Naive thymus-derived CD4-positive, alpha-beta T cell (primary cell): ENCODE measurements at regions of chr2 and their contacts with region 1.

Region 1: GRCh38 chr2:64653349-64654062 is at the start of gene SERTAD2:
- DNase-seq: peak; percentile 80 to 89 (median 86)
- ATAC-seq: peak; percentile 93
- H3K4me3 ChIP-seq: peak within 1 kb of the TSS; percentile 66
- H3K4me3 Mint-ChIP-seq: peak within 1 kb of the TSS; percentile 84 to 99 (median 96)
- H3K27ac ChIP-seq: peak within 1 kb of the TSS; percentile 90
- H3K27ac Mint-ChIP-seq: peak within 1 kb of the TSS; percentile 81 to 98 (median 94)
- H3K4me1 ChIP-seq: peaks cover 8 to 45% of the 10 kb centered on the region in 2 donors
- H3K4me1 Mint-ChIP-seq: peaks cover 44 to 84% (median 80%) of the 10 kb centered on the region in 7 donors
- H3K27me3 ChIP-seq: no peaks in the 10 kb centered on the region
- H3K27me3 Mint-ChIP-seq: no peaks in the 10 kb centered on the region
- total RNA-seq, gene SERTAD2: 34.3 to 43.8 (median 40.1) TPM

Region 2: DNA sequence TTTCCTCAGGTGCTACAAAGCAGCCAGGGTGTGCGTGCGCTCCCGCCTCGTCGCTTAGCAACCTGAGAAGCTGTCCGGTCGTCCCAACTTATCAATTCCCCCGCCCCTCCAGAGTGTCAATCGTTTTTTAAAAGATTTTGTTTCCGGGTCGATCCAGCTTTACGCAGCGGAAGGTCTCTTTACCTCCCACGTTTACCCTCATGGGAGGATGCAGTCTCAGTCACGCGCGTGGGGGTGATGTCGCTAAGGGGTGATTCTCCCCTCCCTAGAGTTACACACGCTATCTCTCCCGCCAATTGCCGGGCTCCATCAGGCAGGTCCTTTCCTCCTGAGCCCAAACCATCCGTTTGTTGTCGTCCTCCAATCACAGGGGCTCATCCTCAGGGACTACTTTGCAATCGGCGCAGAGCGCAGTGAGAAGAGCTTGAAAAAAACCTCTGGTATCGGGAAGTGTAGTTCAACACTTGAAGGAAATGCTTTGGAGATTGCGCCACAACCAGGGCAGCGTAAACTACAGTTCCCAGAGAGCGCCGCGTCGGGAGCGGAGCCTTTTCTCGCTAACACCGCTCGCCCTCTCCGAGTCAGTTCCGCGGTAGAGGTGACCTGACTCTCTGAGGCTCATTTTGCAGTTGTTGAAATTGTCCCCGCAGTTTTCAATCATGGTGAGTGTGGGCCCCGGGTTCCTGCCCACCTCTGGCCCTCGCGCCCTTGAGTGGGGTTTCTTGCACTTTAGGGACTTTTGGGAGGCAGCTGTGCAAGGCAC is 1064.9 kb before region 1 on chr2 and contains the starts of genes MDH1 and WDPCP:
- CTCF ChIA-PET with region 1: no interaction called
- POLR2A ChIA-PET with region 1: no interaction called
- intact Hi-C with region 1: loop called in 1 of 2 experiments (anchors 2 kb)
- DNase-seq: peak; percentile 74 to 99 (median 96)
- ATAC-seq: peak; percentile 89
- H3K4me3 ChIP-seq: peak within 1 kb of the TSS; percentile 91
- H3K4me3 Mint-ChIP-seq: peak within 1 kb of the TSS; percentile 89 to 99 (median 94)
- H3K27ac ChIP-seq: peak within 1 kb of the TSS; percentile 89
- H3K27ac Mint-ChIP-seq: peak within 1 kb of the TSS; percentile 89 to 99 (median 95)
- H3K4me1 ChIP-seq: peaks cover 16 to 23% of the 10 kb centered on the region in 2 donors
- H3K4me1 Mint-ChIP-seq: peaks cover 24 to 63% (median 45%) of the 10 kb centered on the region in 7 donors
- H3K27me3 ChIP-seq: no peaks in the 10 kb centered on the region
- H3K27me3 Mint-ChIP-seq: no peaks in the 10 kb centered on the region
- total RNA-seq, gene MDH1: 76.5 to 180 (median 84.2) TPM
- total RNA-seq, gene WDPCP: 7.6 to 19.2 (median 16.1) TPM

Region 3: GRCh38 chr2:64543008-64543697 is 110.4 kb before region 1 on chr2:
- CTCF ChIA-PET with region 1: no interaction called
- POLR2A ChIA-PET with region 1: no interaction called
- intact Hi-C with region 1: no loop called
- DNase-seq: no peak
- ATAC-seq: no peak
- H3K4me3 ChIP-seq: no peak overlapping the region
- H3K4me3 Mint-ChIP-seq: no peak overlapping the region
- H3K27ac ChIP-seq: no peak overlapping the region
- H3K27ac Mint-ChIP-seq: peak overlapping the region in 1 of 9 donors; percentile 22
- H3K4me1 ChIP-seq: peaks cover 8 to 12% of the 10 kb centered on the region in 2 donors
- H3K4me1 Mint-ChIP-seq: peaks cover 30 to 64% (median 51%) of the 10 kb centered on the region in 7 donors
- H3K27me3 ChIP-seq: no peaks in the 10 kb centered on the region
- H3K27me3 Mint-ChIP-seq: no peaks in the 10 kb centered on the region

Region 4: DNA sequence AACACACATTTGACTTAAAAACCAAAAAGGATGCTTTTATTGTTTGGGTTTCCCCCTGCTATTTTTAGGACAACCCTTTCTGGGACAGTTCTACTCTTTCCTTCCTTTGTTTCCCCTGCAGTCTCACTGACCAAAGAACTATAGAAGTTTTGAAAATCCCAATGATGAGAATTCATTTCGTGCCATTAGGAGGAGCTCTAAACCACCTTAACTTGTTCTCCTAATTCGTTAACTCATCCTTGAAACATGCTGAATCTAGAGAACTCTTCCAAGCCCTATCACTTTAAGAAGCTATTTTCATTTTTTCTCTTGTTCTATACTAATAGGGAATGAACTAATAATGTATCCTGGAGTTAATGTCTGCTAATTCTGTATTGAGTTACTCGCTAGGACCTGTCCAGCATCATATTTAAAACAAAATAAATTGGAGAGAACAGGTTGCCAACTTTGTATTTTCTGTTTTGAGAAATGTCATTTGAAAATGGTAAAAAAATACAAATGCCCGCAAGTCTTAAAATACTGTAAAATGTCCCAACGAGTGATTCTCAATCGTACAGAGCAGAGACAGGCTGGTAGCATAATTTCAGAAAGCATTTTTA is 66.5 kb before region 1 on chr2:
- CTCF ChIA-PET with region 1: interaction called, 9 read pairs
- POLR2A ChIA-PET with region 1: no interaction called
- intact Hi-C with region 1: loop called in 1 of 2 experiments (anchors 2 kb)
- DNase-seq: peak in 6 of 9 donors; percentile 30 to 55 (median 42)
- ATAC-seq: peak; percentile 72
- H3K4me3 ChIP-seq: no peak overlapping the region
- H3K4me3 Mint-ChIP-seq: no peak overlapping the region
- H3K27ac ChIP-seq: no peak overlapping the region
- H3K27ac Mint-ChIP-seq: peak overlapping the region in 1 of 9 donors; percentile 64
- H3K4me1 ChIP-seq: no peaks in the 10 kb centered on the region
- H3K4me1 Mint-ChIP-seq: peaks cover 0 to 14% (median 5%) of the 10 kb centered on the region in 7 donors
- H3K27me3 ChIP-seq: no peaks in the 10 kb centered on the region
- H3K27me3 Mint-ChIP-seq: no peaks in the 10 kb centered on the region

Region 5: DNA sequence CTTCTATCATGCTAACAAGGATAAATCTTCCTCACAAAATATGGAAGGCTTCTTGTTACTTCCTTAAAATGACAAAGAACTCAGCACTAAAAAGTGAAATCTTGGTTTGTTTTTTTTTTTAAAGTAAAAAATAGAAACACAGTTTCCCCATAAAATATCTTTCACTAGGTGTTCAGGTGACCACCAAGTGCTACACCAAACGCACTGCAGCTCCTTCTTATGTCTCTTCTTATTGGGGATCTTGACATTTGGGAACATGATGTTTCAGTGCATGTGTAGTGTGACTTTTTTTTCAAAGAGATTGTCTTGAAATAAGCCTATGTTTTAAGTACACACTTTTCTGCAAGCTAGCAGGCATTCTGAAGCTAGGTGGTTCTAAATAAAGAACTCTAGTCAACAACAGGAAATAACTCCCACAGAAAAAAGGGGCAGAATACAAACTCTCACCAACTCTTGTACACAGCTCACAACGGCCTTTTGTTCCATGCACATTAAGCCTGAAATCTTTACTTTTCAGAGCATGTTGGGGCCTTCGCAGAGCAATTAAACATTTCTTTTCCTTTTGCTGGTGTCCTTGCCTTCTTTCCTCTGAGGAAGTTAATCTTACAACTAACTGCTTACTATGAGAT is 13.4 kb after region 1 on chr2:
- CTCF ChIA-PET with region 1: interaction called, 80 read pairs
- POLR2A ChIA-PET with region 1: interaction called, 244 read pairs
- intact Hi-C with region 1: loop called (anchors 1 to 2 kb)
- DNase-seq: peak in 3 of 9 donors; percentile 43 to 51 (median 51)
- ATAC-seq: peak; percentile 61
- H3K4me3 ChIP-seq: peak overlapping the region; percentile 12
- H3K4me3 Mint-ChIP-seq: peak overlapping the region in 9 of 10 donors; percentile 3 to 76 (median 64)
- H3K27ac ChIP-seq: peak overlapping the region; percentile 58
- H3K27ac Mint-ChIP-seq: peak overlapping the region in 3 of 9 donors; percentile 71 to 91 (median 85)
- H3K4me1 ChIP-seq: peaks cover 15 to 55% of the 10 kb centered on the region in 2 donors
- H3K4me1 Mint-ChIP-seq: peaks cover 28 to 46% (median 35%) of the 10 kb centered on the region in 7 donors
- H3K27me3 ChIP-seq: no peaks in the 10 kb centered on the region
- H3K27me3 Mint-ChIP-seq: no peaks in the 10 kb centered on the region

Region 6: DNA sequence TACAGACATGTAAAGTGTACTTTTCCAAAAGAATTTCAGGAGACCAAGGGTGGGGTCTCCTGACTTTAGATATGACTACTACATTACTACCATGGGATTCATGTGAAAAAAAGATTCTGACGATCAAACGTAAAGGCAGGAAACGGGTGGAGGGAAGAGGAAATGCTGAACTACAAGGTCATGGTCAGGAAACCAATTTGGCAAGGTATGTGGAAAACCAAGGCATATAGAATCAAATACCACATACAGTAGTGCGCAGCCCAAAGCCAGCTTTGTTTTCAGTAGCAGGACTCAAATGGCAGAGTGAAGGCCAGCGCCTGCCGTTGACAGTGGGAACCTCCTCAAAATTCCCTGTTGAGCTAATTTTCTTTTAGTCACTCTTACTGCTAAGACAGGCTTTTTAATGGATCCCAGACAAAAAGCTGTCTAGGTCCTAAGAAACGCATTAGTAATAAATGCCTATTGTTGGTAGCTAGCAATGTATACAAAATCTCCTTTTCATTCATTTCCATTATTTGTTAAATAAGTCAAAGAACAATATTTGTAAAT is 57.8 kb after region 1 on chr2:
- CTCF ChIA-PET with region 1: interaction called, 3 read pairs
- POLR2A ChIA-PET with region 1: interaction called, 4 read pairs
- intact Hi-C with region 1: loop called in 1 of 2 experiments (anchors 5 kb)
- DNase-seq: peak in 5 of 9 donors; percentile 3 to 19 (median 12)
- ATAC-seq: no peak
- H3K4me3 ChIP-seq: no peak overlapping the region
- H3K4me3 Mint-ChIP-seq: peak overlapping the region; percentile 22 to 80 (median 68)
- H3K27ac ChIP-seq: no peak overlapping the region
- H3K27ac Mint-ChIP-seq: peak overlapping the region in 6 of 9 donors; percentile 5 to 76 (median 12)
- H3K4me1 ChIP-seq: peaks cover 5 to 15% of the 10 kb centered on the region in 2 donors
- H3K4me1 Mint-ChIP-seq: peaks cover 17 to 33% (median 19%) of the 10 kb centered on the region in 7 donors
- H3K27me3 ChIP-seq: no peaks in the 10 kb centered on the region
- H3K27me3 Mint-ChIP-seq: no peaks in the 10 kb centered on the region

Region 7: GRCh38 chr2:64819774-64820696 is 166.5 kb after region 1 on chr2:
- CTCF ChIA-PET with region 1: interaction called, 10 read pairs
- POLR2A ChIA-PET with region 1: interaction called, 41 read pairs
- intact Hi-C with region 1: no loop called
- DNase-seq: peak in 8 of 9 donors; percentile 36 to 81 (median 66)
- ATAC-seq: peak; percentile 95
- H3K4me3 ChIP-seq: peak overlapping the region; percentile 19
- H3K4me3 Mint-ChIP-seq: peak overlapping the region; percentile 46 to 88 (median 77)
- H3K27ac ChIP-seq: peak overlapping the region; percentile 59
- H3K27ac Mint-ChIP-seq: peak overlapping the region; percentile 87 to 97 (median 95)
- H3K4me1 ChIP-seq: peaks cover 19 to 25% of the 10 kb centered on the region in 2 donors
- H3K4me1 Mint-ChIP-seq: peaks cover 12 to 41% (median 31%) of the 10 kb centered on the region in 7 donors
- H3K27me3 ChIP-seq: no peaks in the 10 kb centered on the region
- H3K27me3 Mint-ChIP-seq: no peaks in the 10 kb centered on the region

Region 8: DNA sequence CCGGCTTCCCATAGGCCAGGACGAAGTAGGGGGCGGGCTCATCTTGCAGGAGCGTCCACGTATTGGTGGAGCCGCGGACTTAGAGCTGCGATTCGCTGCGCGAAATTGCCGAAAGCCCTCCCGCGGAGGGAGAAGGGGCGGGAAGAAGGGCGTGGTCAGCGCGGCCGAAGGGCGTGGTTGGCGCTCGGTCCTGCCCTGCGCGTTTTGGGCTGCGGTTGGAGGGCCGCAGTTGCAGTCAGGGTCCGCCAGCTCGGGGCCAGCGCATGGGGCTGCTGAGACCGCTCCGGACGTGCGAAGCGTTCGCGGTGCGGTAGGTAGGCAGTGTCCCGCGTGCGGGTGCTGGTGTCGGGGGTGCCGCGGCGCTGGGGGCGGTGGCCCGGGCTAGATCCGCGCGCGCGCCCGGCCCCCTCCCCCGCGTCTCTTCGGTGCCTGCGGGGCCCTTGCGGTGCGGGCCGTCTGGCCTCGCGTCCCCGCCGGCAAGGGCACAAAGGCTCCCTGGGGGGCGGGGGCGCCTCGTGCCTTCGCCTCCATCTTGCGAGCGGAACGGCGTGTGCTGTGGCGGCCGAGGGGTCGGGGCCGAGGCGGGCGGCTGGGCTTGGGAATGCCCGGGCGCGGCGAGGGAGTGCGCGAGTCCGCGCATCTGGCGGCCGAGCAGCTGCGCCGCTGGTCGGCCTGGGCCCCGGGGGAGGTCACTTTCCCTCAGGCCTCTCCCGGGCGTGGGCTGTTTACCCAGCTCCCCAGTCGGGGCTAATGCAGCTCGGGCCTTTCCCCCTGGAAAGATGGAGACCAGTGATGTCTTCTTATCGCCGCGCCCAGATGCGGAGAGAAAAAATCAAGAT is 402.9 kb after region 1 on chr2 and contains the start of gene CEP68:
- CTCF ChIA-PET with region 1: no interaction called
- POLR2A ChIA-PET with region 1: no interaction called
- intact Hi-C with region 1: loop called in 1 of 2 experiments (anchors 5 kb)
- DNase-seq: peak; percentile 88 to 96 (median 95)
- ATAC-seq: peak; percentile 96
- H3K4me3 ChIP-seq: peak within 1 kb of the TSS; percentile 54
- H3K4me3 Mint-ChIP-seq: peak within 1 kb of the TSS; percentile 79 to 99 (median 94)
- H3K27ac ChIP-seq: peak within 1 kb of the TSS; percentile 76
- H3K27ac Mint-ChIP-seq: peak within 1 kb of the TSS; percentile 84 to 97 (median 90)
- H3K4me1 ChIP-seq: peaks cover 10 to 42% of the 10 kb centered on the region in 2 donors
- H3K4me1 Mint-ChIP-seq: peaks cover 41 to 81% (median 61%) of the 10 kb centered on the region in 7 donors
- H3K27me3 ChIP-seq: no peaks in the 10 kb centered on the region
- H3K27me3 Mint-ChIP-seq: peaks cover 0 to 2% (median 0%) of the 10 kb centered on the region in 5 donors
- total RNA-seq, gene CEP68: 8.5 to 52.0 (median 20.8) TPM